Mammary epithelial cell (primary cell): ENCODE measurements at regions of chr11 and their contacts with region 1.

Region 1: DNA sequence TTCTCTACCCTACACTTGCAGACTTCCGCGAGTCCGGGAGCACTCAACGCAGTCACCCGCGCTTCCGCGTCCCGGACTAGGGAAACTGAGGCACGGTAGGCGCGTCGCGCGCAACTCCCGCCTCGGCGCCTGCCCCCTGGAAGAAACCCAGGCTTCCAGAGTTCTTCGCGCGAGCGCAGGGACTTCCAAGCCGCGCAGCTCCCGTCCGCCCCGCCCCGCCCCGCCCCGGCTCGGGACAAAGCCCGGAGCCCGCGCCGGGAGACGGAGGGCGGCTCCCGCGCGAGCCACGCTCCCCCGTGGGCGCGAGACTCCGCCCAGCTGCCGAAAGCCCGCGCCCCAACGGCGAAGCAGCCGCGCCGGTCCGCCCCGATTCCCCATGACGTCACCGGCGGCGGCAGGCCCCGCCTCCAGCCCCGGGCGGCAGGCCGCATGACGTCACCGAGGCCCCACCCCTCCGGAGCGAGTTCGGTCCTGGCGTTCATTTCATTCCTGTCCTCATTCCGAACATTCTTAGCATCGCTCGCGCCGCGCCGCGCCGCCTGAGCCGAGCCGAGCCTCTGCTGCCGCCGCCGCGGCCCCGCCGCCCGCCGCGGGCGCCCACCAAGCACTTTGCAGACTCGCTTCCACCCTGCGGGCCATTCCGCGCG is at the start of gene TEAD1:
- DNase-seq: peak; percentile 91
- H3K4me3 ChIP-seq: peak within 1 kb of the TSS; percentile 70 to 85 (median 84)
- H3K27ac ChIP-seq: peak within 1 kb of the TSS; percentile 84
- H3K4me1 ChIP-seq: peaks cover 22% of the 10 kb centered on the region
- H3K27me3 ChIP-seq: no peaks in the 10 kb centered on the region
- CTCF ChIP-seq: no peak
- total RNA-seq, gene TEAD1: 93.9 to 107 TPM

Region 2: DNA sequence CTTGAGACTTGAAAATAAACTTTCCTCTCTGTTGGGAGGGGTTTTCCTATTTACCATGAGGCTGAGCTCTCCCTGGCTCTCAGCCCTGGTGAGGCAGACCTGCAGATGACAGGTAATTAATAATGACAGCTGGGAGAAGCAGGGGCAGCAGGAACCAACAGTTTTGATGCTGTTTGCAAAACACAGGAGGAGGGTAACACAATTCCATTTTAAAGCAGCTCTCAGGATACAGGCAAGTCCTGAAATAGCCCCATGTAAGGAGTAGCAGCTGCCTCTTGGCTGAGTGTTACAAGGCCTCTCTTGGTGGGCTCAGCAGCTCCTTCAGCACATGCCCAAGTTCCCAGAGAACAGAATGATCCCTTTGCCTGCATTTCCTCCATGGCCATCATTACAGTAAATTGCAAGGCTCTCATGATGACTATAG is 283.3 kb before region 1 on chr11:
- CTCF ChIA-PET with region 1: no interaction called
- dilution Hi-C with region 1: no loop called
- in situ Hi-C with region 1: no loop called
- intact Hi-C with region 1: loop called (anchors 10 kb)
- DNase-seq: no peak
- H3K4me3 ChIP-seq: no peak overlapping the region
- H3K27ac ChIP-seq: peak overlapping the region; percentile 82
- H3K4me1 ChIP-seq: peaks cover 45% of the 10 kb centered on the region
- H3K27me3 ChIP-seq: no peaks in the 10 kb centered on the region
- CTCF ChIP-seq: no peak

Region 3: GRCh38 chr11:12526789-12527188 is 147.3 kb before region 1 on chr11:
- CTCF ChIA-PET with region 1: no interaction called
- dilution Hi-C with region 1: no loop called
- in situ Hi-C with region 1: no loop called
- intact Hi-C with region 1: loop called (anchors 5 kb)
- DNase-seq: no peak
- H3K4me3 ChIP-seq: no peak overlapping the region
- H3K27ac ChIP-seq: no peak overlapping the region
- H3K4me1 ChIP-seq: peaks cover 28% of the 10 kb centered on the region
- H3K27me3 ChIP-seq: no peaks in the 10 kb centered on the region
- CTCF ChIP-seq: no peak

Region 4: GRCh38 chr11:12642040-12642439 is 32.0 kb before region 1 on chr11:
- CTCF ChIA-PET with region 1: no interaction called
- dilution Hi-C with region 1: no loop called
- in situ Hi-C with region 1: no loop called
- intact Hi-C with region 1: no loop called
- DNase-seq: peak; percentile 3
- H3K4me3 ChIP-seq: no peak overlapping the region
- H3K27ac ChIP-seq: no peak overlapping the region
- H3K4me1 ChIP-seq: no peaks in the 10 kb centered on the region
- H3K27me3 ChIP-seq: no peaks in the 10 kb centered on the region
- CTCF ChIP-seq: no peak

Region 5: GRCh38 chr11:12693479-12694181 is 19.6 kb after region 1 on chr11:
- CTCF ChIA-PET with region 1: interaction called, 4 read pairs
- dilution Hi-C with region 1: no loop called
- in situ Hi-C with region 1: no loop called
- intact Hi-C with region 1: loop called (anchors 2 kb)
- DNase-seq: peak; percentile 99
- H3K4me3 ChIP-seq: peak overlapping the region; percentile 25 to 26 (median 26)
- H3K27ac ChIP-seq: peak overlapping the region; percentile 98
- H3K4me1 ChIP-seq: peaks cover 79% of the 10 kb centered on the region
- H3K27me3 ChIP-seq: no peaks in the 10 kb centered on the region
- CTCF ChIP-seq: no peak

Region 6: DNA sequence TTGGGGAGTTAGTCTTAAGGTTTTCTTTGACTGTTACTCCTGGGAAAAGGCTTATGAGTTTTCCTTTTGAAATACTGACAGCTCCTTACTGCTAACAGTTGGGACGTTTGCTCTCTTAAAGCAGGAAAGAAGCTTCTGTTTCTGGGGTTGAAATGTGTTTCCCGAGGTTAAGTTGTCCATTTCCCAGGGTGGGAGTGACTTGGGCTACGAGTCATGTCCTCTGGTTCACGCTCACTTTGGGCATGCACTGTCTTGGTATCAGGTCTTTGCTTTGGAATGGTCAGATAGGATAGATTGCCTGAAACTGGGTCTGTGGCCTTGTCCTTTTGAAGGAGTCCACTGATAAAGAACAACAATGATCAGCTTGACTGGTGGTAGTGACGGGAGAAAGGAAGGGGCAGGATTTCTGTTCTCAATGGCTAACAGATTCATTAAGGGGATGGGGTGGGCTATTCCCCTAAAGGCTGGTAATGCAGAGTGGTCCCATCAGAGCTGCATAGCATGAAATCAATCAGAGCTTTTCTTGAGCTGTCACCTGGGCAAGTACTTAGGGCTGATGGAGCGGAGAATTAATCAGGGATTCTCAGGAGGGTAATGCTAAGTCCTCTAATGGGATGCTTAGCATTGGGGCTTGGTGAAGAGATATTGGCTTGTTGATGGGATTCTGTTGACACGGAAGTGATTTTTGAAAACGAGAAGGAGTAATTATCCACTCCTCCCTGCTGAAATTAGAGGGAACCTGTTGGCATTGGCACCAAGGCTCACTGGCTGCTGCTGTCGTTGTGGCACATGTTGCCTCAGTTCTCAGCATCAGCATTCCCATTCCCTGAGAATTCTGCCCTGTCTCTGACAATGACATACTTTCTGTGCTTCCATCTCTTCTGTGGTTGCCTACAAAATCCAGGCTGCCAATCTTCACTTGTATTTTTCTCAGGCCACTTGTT is 81.7 kb after region 1 on chr11:
- CTCF ChIA-PET with region 1: no interaction called
- dilution Hi-C with region 1: no loop called
- in situ Hi-C with region 1: no loop called
- intact Hi-C with region 1: loop called (anchors 2 kb)
- DNase-seq: peak; percentile 56
- H3K4me3 ChIP-seq: no peak overlapping the region
- H3K27ac ChIP-seq: no peak overlapping the region
- H3K4me1 ChIP-seq: peaks cover 33% of the 10 kb centered on the region
- H3K27me3 ChIP-seq: no peaks in the 10 kb centered on the region
- CTCF ChIP-seq: no peak

Region 7: GRCh38 chr11:12802418-12803085 is 128.5 kb after region 1 on chr11:
- CTCF ChIA-PET with region 1: no interaction called
- dilution Hi-C with region 1: no loop called
- in situ Hi-C with region 1: no loop called
- intact Hi-C with region 1: loop called (anchors 1 kb)
- DNase-seq: peak; percentile 99
- H3K4me3 ChIP-seq: no peak overlapping the region
- H3K27ac ChIP-seq: peak overlapping the region; percentile 96
- H3K4me1 ChIP-seq: peaks cover 84% of the 10 kb centered on the region
- H3K27me3 ChIP-seq: no peaks in the 10 kb centered on the region
- CTCF ChIP-seq: no peak